ENCODE measurements at regions of chr7 and their contacts with region 1.

Region 1: GRCh38 chr7:139679731-139680594 is 97.8 kb downstream of the HIPK2 start:
- DNase-seq: no peak
- H3K4me3 ChIP-seq: no peak overlapping the region
- CTCF ChIP-seq: no peak

Region 2: GRCh38 chr7:139731802-139732470 is 52.0 kb after region 1 on chr7:
- in situ Hi-C with region 1: no loop called
- DNase-seq: peak; percentile 66
- H3K4me3 ChIP-seq: no peak overlapping the region
- CTCF ChIP-seq: no peak

Region 3: GRCh38 chr7:139767561-139767982 is 87.6 kb after region 1 on chr7:
- in situ Hi-C with region 1: loop called (anchors 5 kb)
- DNase-seq: no peak
- H3K4me3 ChIP-seq: no peak overlapping the region
- CTCF ChIP-seq: no peak

Measured in astrocyte of the cerebellum (primary cell).